ENCODE measurements at regions of chr7 and their contacts with region 1.

Region 1: GRCh38 chr7:128209229-128210035 is 31.6 kb upstream of the LEP start:
- DNase-seq: peak; percentile 78
- ATAC-seq: peak; percentile 96
- H3K4me3 ChIP-seq: no peak overlapping the region
- H3K27ac ChIP-seq: no peak overlapping the region
- H3K4me1 ChIP-seq: no peaks in the 10 kb centered on the region
- H3K27me3 ChIP-seq: peaks cover 31% of the 10 kb centered on the region
- CTCF ChIP-seq: peak; percentile 96

Region 2: GRCh38 chr7:127751490-127752448 is 457.7 kb before region 1 on chr7:
- intact Hi-C with region 1: no loop called
- DNase-seq: no peak
- ATAC-seq: peak; percentile 50
- H3K4me3 ChIP-seq: no peak overlapping the region
- H3K27ac ChIP-seq: no peak overlapping the region
- H3K4me1 ChIP-seq: peaks cover 11% of the 10 kb centered on the region
- H3K27me3 ChIP-seq: no peaks in the 10 kb centered on the region
- CTCF ChIP-seq: no peak

Region 3: GRCh38 chr7:128066861-128067260 is 142.6 kb before region 1 on chr7:
- intact Hi-C with region 1: no loop called
- DNase-seq: no peak
- ATAC-seq: no peak
- H3K4me3 ChIP-seq: no peak overlapping the region
- H3K27ac ChIP-seq: no peak overlapping the region
- H3K4me1 ChIP-seq: no peaks in the 10 kb centered on the region
- H3K27me3 ChIP-seq: no peaks in the 10 kb centered on the region
- CTCF ChIP-seq: no peak

Region 4: GRCh38 chr7:128135515-128136214 is 73.8 kb before region 1 on chr7:
- intact Hi-C with region 1: loop called (anchors 5 kb)
- DNase-seq: peak; percentile 81
- ATAC-seq: peak; percentile 99
- H3K4me3 ChIP-seq: peak overlapping the region; percentile 57
- H3K27ac ChIP-seq: no peak overlapping the region
- H3K4me1 ChIP-seq: peaks cover 11% of the 10 kb centered on the region
- H3K27me3 ChIP-seq: peaks cover 39% of the 10 kb centered on the region
- CTCF ChIP-seq: peak; percentile 78

Region 5: GRCh38 chr7:128530855-128531104 is 321.3 kb after region 1 on chr7:
- intact Hi-C with region 1: no loop called
- DNase-seq: no peak
- ATAC-seq: no peak
- H3K4me3 ChIP-seq: peak overlapping the region; percentile 73
- H3K27ac ChIP-seq: peak overlapping the region; percentile 95
- H3K4me1 ChIP-seq: peaks cover 20% of the 10 kb centered on the region
- H3K27me3 ChIP-seq: no peaks in the 10 kb centered on the region
- CTCF ChIP-seq: no peak

Measured in upper lobe of right lung (tissue), 1 donor.